ENCODE measurements at regions of chr13 and their contacts with region 1.

Region 1: DNA sequence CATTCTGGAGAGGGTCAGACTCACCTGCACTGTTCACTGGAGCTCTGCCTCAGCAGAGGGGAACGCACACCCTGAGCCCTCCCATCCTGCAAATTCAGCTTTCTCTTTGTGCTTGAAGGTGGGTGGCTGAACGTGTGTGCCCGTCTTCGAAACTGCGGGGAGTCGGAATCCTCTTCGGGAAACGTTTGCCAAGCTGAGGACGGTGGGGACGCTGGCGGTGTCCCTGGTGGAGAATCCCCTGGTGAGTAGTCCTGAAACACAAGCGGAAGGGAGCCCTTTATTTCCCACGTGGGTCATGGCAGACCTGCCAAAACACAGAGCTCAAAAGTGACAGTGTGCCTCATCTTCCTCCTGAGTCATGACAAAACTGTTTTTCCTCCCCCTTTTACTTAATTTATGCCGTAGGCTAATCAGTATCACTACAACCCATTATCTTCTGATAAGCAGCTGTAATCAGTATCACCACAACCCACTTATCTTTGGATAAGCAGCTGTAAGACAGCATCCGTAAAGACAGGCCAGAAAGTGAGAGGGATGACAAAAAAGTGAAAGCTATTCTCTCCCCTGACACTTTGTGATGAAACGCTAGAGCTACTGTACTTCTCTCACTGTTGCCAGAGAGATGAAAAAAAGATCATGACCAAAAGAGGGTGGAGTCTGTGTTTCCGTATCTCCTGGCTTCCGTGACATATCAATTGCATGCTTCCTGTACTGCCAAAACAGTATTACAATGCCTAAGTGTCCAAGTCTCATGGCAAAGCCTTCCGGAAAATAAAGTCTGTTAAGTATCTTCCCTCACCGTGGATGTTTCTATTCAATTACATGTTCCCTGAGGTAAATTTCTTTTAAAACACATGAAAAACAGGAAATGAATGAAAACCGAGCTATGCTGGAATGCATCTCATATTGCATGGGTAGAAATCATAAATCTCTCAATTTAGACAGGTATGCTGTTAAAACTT is 155.5 kb downstream of the TBC1D4 start:
- DNase-seq: peak; percentile 83
- H3K4me3 Mint-ChIP-seq: peak overlapping the region; percentile 92
- H3K27ac Mint-ChIP-seq: peak overlapping the region; percentile 98
- H3K4me1 Mint-ChIP-seq: peaks cover 26% of the 10 kb centered on the region
- H3K27me3 Mint-ChIP-seq: no peaks in the 10 kb centered on the region

Region 2: DNA sequence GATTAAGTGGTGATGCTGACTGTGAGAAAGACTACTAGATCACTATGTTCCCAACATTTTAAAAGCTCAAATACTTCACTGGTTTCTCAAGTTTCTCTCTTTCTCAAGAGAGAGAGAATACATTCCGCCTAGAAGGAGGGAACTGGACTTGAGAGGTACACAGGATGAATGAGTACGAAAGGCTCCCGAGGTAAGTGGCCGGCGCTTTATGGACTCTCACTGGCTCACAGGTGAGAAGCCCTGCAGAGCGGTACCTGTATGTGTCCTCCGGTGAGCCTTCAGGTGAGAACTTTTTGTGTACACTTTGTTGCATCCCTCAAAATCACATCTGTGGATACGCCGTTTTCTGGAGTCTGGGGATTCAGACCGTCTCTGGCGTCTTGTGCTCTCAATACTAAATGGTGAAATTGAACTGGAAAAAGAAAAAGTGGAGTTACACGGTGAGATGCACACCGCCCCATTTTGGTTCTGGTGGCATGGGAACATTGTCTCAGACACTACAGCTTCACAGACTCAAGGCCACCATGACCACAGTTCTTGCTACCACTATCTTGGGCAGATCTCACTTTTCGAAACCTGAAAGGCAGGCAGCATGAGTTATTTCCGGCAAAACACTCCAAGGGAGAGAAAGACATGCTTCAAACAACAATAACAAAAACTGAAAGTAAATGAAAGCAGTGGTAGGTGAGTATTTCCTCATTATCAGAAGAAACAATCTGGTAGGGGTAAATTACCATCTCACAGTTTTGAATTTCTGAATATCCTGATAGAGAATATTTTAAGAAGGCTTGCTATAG is 1611.1 kb before region 1 on chr13:
- CTCF ChIA-PET with region 1: no interaction called
- intact Hi-C with region 1: loop called (anchors 5 kb)
- DNase-seq: peak; percentile 76
- H3K4me3 Mint-ChIP-seq: peak overlapping the region; percentile 68
- H3K27ac Mint-ChIP-seq: peak overlapping the region; percentile 68
- H3K4me1 Mint-ChIP-seq: peaks cover 53% of the 10 kb centered on the region
- H3K27me3 Mint-ChIP-seq: no peaks in the 10 kb centered on the region

Region 3: GRCh38 chr13:74230984-74231501 is 1095.4 kb before region 1 on chr13:
- CTCF ChIA-PET with region 1: no interaction called
- intact Hi-C with region 1: loop called (anchors 5 kb)
- DNase-seq: no peak
- H3K4me3 Mint-ChIP-seq: peak overlapping the region; percentile 52
- H3K27ac Mint-ChIP-seq: peak overlapping the region; percentile 65
- H3K4me1 Mint-ChIP-seq: peaks cover 40% of the 10 kb centered on the region
- H3K27me3 Mint-ChIP-seq: no peaks in the 10 kb centered on the region

Region 4: DNA sequence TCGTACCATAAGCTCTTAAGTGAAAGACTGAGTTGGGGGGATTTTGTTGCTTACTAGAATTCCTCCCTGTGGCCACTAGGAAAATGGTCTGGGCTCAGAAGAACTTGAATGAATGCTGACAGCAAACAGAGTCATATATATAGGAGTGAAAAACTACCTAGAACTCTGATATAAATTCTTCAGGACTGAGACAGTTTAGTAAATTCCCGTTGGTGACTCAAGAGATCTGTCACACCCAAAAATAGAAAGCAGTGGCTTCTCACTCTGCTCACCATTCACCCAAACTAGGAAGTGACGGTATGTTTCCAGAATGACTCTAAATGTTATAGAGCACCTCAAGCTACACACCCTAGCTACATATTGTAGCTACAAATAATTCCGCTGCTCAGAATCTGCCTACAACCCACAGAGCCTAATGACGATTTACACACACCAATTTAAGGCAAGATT is 39.3 kb after region 1 on chr13:
- CTCF ChIA-PET with region 1: interaction called, 7 read pairs
- intact Hi-C with region 1: loop called (anchors 1 kb)
- DNase-seq: peak; percentile 40
- H3K4me3 Mint-ChIP-seq: peak overlapping the region; percentile 4
- H3K27ac Mint-ChIP-seq: peak overlapping the region; percentile 77
- H3K4me1 Mint-ChIP-seq: peaks cover 35% of the 10 kb centered on the region
- H3K27me3 Mint-ChIP-seq: peaks cover 4% of the 10 kb centered on the region

Region 5: GRCh38 chr13:75549262-75550158 is 223.1 kb after region 1 on chr13 and contains the start of gene UCHL3:
- CTCF ChIA-PET with region 1: interaction called, 4 read pairs
- intact Hi-C with region 1: loop called (anchors 1 kb)
- DNase-seq: peak; percentile 98
- H3K4me3 Mint-ChIP-seq: peak within 1 kb of the TSS; percentile 87
- H3K27ac Mint-ChIP-seq: peak within 1 kb of the TSS; percentile 94
- H3K4me1 Mint-ChIP-seq: peaks cover 40% of the 10 kb centered on the region
- H3K27me3 Mint-ChIP-seq: no peaks in the 10 kb centered on the region
- total RNA-seq, gene UCHL3: 37.3 to 37.6 TPM

Region 6: DNA sequence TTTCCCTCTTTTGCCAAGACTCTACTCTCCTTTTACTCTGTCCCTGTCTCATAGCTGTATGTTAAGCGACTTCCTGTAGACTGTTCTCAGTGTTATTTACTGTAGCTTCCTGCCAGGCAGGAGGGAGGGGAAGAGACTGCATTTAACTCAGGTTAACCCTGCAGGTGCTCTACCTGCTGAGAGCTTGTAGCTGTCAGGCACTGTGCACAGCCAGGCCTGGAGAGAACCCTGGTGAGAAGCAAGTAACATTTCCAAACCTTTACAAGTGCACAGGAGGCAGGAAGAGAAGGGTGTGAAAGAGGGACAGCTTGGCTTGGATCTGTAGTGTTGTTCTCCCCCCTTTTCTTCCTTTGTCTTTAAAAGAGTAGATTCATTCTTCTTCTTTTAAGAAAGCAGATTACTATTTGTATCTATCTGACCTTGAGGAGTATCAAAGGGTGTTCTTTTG is 476.7 kb after region 1 on chr13:
- CTCF ChIA-PET with region 1: no interaction called
- intact Hi-C with region 1: loop called (anchors 10 kb)
- DNase-seq: peak; percentile 44
- H3K4me3 Mint-ChIP-seq: peak overlapping the region; percentile 35
- H3K27ac Mint-ChIP-seq: peak overlapping the region; percentile 48
- H3K4me1 Mint-ChIP-seq: peaks cover 51% of the 10 kb centered on the region
- H3K27me3 Mint-ChIP-seq: no peaks in the 10 kb centered on the region